Activated naive CD4-positive, alpha-beta T cell treated with anti-CD3 and anti-CD28 coated beads for 36 hours (primary cell): ENCODE measurements at regions of chr1 and their contacts with region 1.

Region 1: GRCh38 chr1:67239738-67240137 is 67.9 kb upstream of the IL12RB2 start:
- DNase-seq: no peak
- H3K4me3 Mint-ChIP-seq: no peak overlapping the region
- H3K27ac Mint-ChIP-seq: no peak overlapping the region
- H3K4me1 Mint-ChIP-seq: peaks cover 24% of the 10 kb centered on the region
- H3K27me3 Mint-ChIP-seq: no peaks in the 10 kb centered on the region

Region 2: DNA sequence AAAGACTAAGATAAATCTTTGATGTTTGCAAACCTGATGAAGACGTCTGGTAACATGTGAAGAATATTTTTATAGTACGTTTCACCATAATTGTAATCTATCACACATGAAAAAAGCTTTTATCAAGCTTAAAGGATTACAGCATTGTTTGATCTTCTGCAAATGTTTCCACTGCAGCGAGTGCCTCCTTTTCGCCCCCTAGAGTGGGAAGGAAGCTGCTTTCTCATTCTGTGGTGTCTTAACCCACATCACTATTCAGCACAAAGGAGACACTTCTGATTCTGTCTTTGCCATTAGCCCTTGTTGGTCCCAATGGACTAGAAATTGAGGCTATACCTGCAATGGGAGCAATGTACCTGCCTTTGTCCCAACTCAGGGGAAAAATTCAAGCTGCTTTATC is 21.9 kb after region 1 on chr1:
- CTCF ChIA-PET with region 1: interaction called, 6 read pairs
- intact Hi-C with region 1: loop called (anchors 2 kb)
- DNase-seq: peak; percentile 68
- H3K4me3 Mint-ChIP-seq: no peak overlapping the region
- H3K27ac Mint-ChIP-seq: no peak overlapping the region
- H3K4me1 Mint-ChIP-seq: peaks cover 26% of the 10 kb centered on the region
- H3K27me3 Mint-ChIP-seq: no peaks in the 10 kb centered on the region